A549 (cell line): ENCODE measurements at regions of chr16 and their contacts with region 1.

Region 1: GRCh38 chr16:14300705-14301168 is 229.6 kb downstream of the MRTFB start:
- DNase-seq: peak; percentile 78 to 91
- ATAC-seq: peak; percentile 64 to 78
- H3K4me3 ChIP-seq: peak overlapping the region; percentile 98
- H3K27ac ChIP-seq: peak overlapping the region; percentile 99 to 100
- H3K4me1 ChIP-seq: peaks cover 10% of the 10 kb centered on the region
- CTCF ChIP-seq: peak; percentile 75
- EP300 ChIP-seq: no peak
- POLR2A ChIP-seq: no peak
- RAD21 ChIP-seq: peak; percentile 91 to 95

Region 2: GRCh38 chr16:14264327-14264943 is 36.3 kb before region 1 on chr16:
- CTCF ChIA-PET with region 1: no interaction called
- POLR2A ChIA-PET with region 1: no interaction called
- DNase-seq: no peak
- ATAC-seq: no peak
- H3K4me3 ChIP-seq: no peak overlapping the region
- H3K27ac ChIP-seq: no peak overlapping the region
- H3K4me1 ChIP-seq: no peaks in the 10 kb centered on the region
- CTCF ChIP-seq: no peak
- EP300 ChIP-seq: no peak
- POLR2A ChIP-seq: no peak
- RAD21 ChIP-seq: no peak

Region 3: DNA sequence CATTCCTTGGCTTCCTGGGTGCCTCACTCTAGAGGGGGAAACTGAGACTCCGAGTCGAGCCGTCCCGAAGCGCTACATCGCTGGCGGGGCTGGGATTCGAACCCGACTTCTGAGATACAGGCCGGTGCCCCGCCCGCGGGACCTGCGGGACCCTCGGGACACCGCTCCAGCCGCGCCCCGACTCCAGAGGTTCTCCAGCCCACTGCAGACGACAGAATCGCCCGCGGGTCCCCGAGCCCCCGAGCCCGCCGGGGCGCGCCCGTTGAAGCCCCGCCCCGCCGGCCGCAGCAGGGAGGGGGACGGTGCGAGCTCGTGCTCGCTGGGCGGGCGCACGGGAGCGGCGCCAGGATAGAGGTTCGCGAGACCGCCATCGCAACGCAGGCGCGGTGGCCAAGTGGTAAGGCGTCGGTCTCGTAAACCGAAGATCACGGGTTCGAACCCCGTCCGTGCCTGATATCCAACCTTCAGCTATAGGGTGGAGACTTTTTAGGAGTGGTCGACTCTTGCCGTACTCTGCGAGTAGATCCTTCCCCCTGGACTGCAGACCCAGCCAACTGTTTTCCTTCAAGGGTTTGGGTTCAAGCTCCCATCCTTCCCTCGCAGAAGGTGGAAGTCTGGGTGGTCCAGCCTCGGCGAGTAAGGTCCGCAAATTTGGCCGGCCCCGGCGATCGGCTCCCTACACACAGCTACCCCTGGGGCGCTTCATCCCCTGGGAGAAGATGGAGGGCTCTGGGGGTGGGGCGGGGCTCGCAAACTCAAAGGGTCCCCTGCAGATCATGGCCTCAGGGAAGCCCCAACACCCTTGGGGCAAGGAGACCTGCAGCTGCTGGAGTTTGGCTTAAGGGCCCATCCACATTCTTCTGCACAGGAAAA is 15.0 kb before region 1 on chr16:
- CTCF ChIA-PET with region 1: interaction called, 34 read pairs
- POLR2A ChIA-PET with region 1: interaction called, 5 read pairs
- DNase-seq: peak; percentile 82 to 93
- ATAC-seq: peak; percentile 83 to 87
- H3K4me3 ChIP-seq: peak overlapping the region; percentile 62
- H3K27ac ChIP-seq: peak overlapping the region; percentile 83 to 91
- H3K4me1 ChIP-seq: peaks cover 12% of the 10 kb centered on the region; the same call in 1 of the 3 replicates
- CTCF ChIP-seq: no peak
- EP300 ChIP-seq: no peak
- POLR2A ChIP-seq: peak; percentile 31; the same call in 1 of the 2 replicates
- RAD21 ChIP-seq: peak in 1 of 2 experiments; percentile 20; a peak in 1 of 5 replicates

Region 4: DNA sequence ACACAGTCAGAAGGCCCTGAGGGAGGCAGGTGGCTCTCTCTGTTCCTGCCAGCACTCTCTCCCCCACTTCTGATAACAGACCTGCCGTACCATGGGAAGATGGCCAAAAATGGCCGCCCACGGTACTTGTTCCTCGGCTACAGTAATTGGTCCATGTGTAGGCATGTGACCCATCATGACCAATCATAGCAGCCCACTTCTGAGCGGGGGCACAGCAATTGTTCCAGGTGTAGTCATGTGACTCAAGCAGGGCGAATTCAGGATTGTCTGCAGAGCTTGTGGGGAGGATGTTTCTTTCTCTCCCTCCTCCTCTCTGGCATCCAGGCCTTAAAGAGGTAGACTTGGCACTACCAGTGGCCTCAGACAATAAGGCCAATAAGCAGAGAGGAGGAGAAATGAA is 20.8 kb after region 1 on chr16:
- CTCF ChIA-PET with region 1: interaction called, 6 read pairs
- POLR2A ChIA-PET with region 1: interaction called, 11 read pairs
- DNase-seq: peak; percentile 52 to 56
- ATAC-seq: peak; percentile 61 to 63; a peak in 5 of 6 replicates
- H3K4me3 ChIP-seq: no peak overlapping the region
- H3K27ac ChIP-seq: peak overlapping the region in 1 of 2 experiments; percentile 46; a peak in 2 of 6 replicates
- H3K4me1 ChIP-seq: peaks cover 74% of the 10 kb centered on the region
- CTCF ChIP-seq: no peak
- EP300 ChIP-seq: no peak
- POLR2A ChIP-seq: no peak
- RAD21 ChIP-seq: no peak

Region 5: GRCh38 chr16:14337303-14338191 is 36.8 kb after region 1 on chr16:
- CTCF ChIA-PET with region 1: no interaction called
- POLR2A ChIA-PET with region 1: no interaction called
- DNase-seq: no peak
- ATAC-seq: peak; percentile 25 to 35; a peak in 4 of 6 replicates
- H3K4me3 ChIP-seq: no peak overlapping the region
- H3K27ac ChIP-seq: peak overlapping the region in 1 of 2 experiments; percentile 73; a peak in 3 of 6 replicates
- H3K4me1 ChIP-seq: 0 out of 3 replicates have a peak, but pooled peaks cover 4% of the 10 kb centered on the region
- CTCF ChIP-seq: no peak
- EP300 ChIP-seq: no peak
- POLR2A ChIP-seq: no peak
- RAD21 ChIP-seq: no peak

Region 6: GRCh38 chr16:14369730-14370624 is 69.2 kb after region 1 on chr16:
- CTCF ChIA-PET with region 1: interaction called, 10 read pairs
- POLR2A ChIA-PET with region 1: interaction called, 8 read pairs
- DNase-seq: no peak
- ATAC-seq: no peak
- H3K4me3 ChIP-seq: no peak overlapping the region
- H3K27ac ChIP-seq: peak overlapping the region; percentile 71 to 98
- H3K4me1 ChIP-seq: peaks cover 48% of the 10 kb centered on the region
- CTCF ChIP-seq: no peak
- EP300 ChIP-seq: no peak
- POLR2A ChIP-seq: no peak
- RAD21 ChIP-seq: no peak